CD14-positive monocyte (primary cell): ENCODE measurements at regions of chr5 and their contacts with region 1.

Region 1: GRCh38 chr5:111757355-111758283 is 625 bp upstream of the NREP start:
- DNase-seq: peak; percentile 82 to 92 (median 86)
- H3K4me3 ChIP-seq: peak overlapping the region; percentile 56 to 87 (median 85)
- H3K4me3 Mint-ChIP-seq: peak overlapping the region; percentile 86 to 91
- H3K27ac ChIP-seq: peak overlapping the region; percentile 88 to 89
- H3K27ac Mint-ChIP-seq: peak overlapping the region; percentile 79 to 93 (median 89)
- H3K4me1 ChIP-seq: peaks cover 20 to 37% of the 10 kb centered on the region in 2 donors
- H3K4me1 Mint-ChIP-seq: peaks cover 37% of the 10 kb centered on the region
- H3K27me3 ChIP-seq: no peaks in the 10 kb centered on the region
- H3K27me3 Mint-ChIP-seq: no peaks in the 10 kb centered on the region
- CTCF ChIP-seq: peak; percentile 20

Region 2: GRCh38 chr5:111530298-111530740 is 227.3 kb before region 1 on chr5:
- intact Hi-C with region 1: loop called in 1 of 2 experiments (anchors 10 kb)
- DNase-seq: peak; percentile 96 to 99 (median 98)
- H3K4me3 ChIP-seq: peak overlapping the region in 1 of 3 experiments; percentile 30
- H3K4me3 Mint-ChIP-seq: peak overlapping the region in 1 of 2 donors; percentile 20
- H3K27ac ChIP-seq: peak overlapping the region; percentile 64 to 95
- H3K27ac Mint-ChIP-seq: peak overlapping the region; percentile 93 to 97 (median 95)
- H3K4me1 ChIP-seq: peaks cover 41 to 60% of the 10 kb centered on the region in 2 donors
- H3K4me1 Mint-ChIP-seq: peaks cover 53% of the 10 kb centered on the region
- H3K27me3 ChIP-seq: no peaks in the 10 kb centered on the region
- H3K27me3 Mint-ChIP-seq: peaks cover 0 to 4% (median 0%) of the 10 kb centered on the region in 3 donors
- CTCF ChIP-seq: no peak

Region 3: GRCh38 chr5:111550279-111551020 is 207.2 kb before region 1 on chr5:
- intact Hi-C with region 1: loop called in 1 of 2 experiments (anchors 10 kb)
- DNase-seq: peak; percentile 77 to 92 (median 88)
- H3K4me3 ChIP-seq: no peak overlapping the region
- H3K4me3 Mint-ChIP-seq: no peak overlapping the region
- H3K27ac ChIP-seq: no peak overlapping the region
- H3K27ac Mint-ChIP-seq: peak overlapping the region in 3 of 7 donors; percentile 23 to 71 (median 46)
- H3K4me1 ChIP-seq: peaks cover 15 to 20% of the 10 kb centered on the region in 2 donors
- H3K4me1 Mint-ChIP-seq: peaks cover 17% of the 10 kb centered on the region
- H3K27me3 ChIP-seq: no peaks in the 10 kb centered on the region
- H3K27me3 Mint-ChIP-seq: peaks cover 0 to 2% (median 0%) of the 10 kb centered on the region in 3 donors
- CTCF ChIP-seq: peak; percentile 72